A673 (cell line): ENCODE measurements at regions of chr15 and their contacts with region 1.

Region 1: DNA sequence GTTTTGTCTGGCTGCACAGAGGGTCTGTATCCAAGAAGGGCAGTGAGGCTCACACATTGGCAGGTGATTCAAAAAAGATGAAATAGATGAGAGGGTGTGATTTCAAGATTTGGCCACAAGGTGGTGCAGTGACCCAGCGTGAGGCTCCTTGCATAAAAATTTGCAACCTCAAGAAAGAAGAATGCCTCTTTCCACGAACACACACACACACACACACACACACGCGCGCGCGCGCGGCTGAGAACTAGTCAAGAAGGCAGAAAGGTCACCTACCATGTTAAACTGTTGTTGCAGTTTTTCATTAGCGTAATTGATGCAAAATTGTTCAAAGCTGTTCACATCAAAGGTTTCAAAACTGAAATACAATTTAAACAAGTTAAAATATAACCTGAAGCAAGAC is 39.2 kb downstream of the MYO5C start:
- DNase-seq: peak; percentile 82
- H3K4me3 ChIP-seq: no peak overlapping the region
- H3K27ac ChIP-seq: no peak overlapping the region
- H3K4me1 ChIP-seq: peaks cover 5% of the 10 kb centered on the region
- H3K27me3 ChIP-seq: no peaks in the 10 kb centered on the region
- CTCF ChIP-seq: peak; percentile 81

Region 2: DNA sequence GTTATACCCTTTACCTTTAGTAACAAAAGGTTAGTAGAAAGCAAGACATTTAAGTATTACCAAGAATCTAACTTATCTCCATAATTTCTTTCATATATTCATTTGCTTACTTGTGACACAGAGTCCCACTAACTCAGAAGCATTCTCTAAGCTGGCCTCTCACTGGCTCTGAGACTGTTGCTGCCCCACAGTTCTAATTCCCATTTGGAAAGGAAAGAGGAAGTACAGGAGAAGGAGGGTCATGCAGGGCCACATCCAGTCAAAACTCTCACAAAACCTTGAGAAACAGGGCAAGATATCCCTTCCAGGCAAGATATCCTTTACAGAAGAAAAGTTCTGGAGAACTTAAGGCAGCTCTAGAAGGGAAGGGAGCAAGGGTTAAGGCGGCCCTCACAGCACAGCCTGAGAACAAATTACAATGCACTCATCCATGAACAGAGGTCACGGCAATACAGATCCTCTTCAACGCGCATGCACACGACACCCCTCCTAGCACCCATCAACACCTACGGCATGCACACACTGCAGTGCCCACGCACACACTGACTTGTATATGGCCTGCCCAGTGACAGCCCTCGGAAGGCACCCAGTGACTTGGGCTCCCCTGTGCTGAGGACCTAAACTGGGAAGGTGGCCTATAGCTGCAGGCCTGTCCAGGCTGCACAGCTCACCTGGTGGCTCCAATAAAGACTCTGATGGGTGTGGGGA is 52.2 kb after region 1 on chr15:
- CTCF ChIA-PET with region 1: no interaction called
- POLR2A ChIA-PET with region 1: no interaction called
- intact Hi-C with region 1: no loop called
- DNase-seq: no peak
- H3K4me3 ChIP-seq: no peak overlapping the region
- H3K27ac ChIP-seq: no peak overlapping the region
- H3K4me1 ChIP-seq: no peaks in the 10 kb centered on the region
- H3K27me3 ChIP-seq: no peaks in the 10 kb centered on the region
- CTCF ChIP-seq: no peak

Region 3: GRCh38 chr15:52337198-52337853 is 81.0 kb after region 1 on chr15:
- CTCF ChIA-PET with region 1: no interaction called
- POLR2A ChIA-PET with region 1: no interaction called
- intact Hi-C with region 1: loop called (anchors 5 kb)
- DNase-seq: no peak
- H3K4me3 ChIP-seq: no peak overlapping the region
- H3K27ac ChIP-seq: no peak overlapping the region
- H3K4me1 ChIP-seq: no peaks in the 10 kb centered on the region
- H3K27me3 ChIP-seq: no peaks in the 10 kb centered on the region
- CTCF ChIP-seq: no peak